ENCODE measurements at regions of chr5 and their contacts with region 1.

Region 1: DNA sequence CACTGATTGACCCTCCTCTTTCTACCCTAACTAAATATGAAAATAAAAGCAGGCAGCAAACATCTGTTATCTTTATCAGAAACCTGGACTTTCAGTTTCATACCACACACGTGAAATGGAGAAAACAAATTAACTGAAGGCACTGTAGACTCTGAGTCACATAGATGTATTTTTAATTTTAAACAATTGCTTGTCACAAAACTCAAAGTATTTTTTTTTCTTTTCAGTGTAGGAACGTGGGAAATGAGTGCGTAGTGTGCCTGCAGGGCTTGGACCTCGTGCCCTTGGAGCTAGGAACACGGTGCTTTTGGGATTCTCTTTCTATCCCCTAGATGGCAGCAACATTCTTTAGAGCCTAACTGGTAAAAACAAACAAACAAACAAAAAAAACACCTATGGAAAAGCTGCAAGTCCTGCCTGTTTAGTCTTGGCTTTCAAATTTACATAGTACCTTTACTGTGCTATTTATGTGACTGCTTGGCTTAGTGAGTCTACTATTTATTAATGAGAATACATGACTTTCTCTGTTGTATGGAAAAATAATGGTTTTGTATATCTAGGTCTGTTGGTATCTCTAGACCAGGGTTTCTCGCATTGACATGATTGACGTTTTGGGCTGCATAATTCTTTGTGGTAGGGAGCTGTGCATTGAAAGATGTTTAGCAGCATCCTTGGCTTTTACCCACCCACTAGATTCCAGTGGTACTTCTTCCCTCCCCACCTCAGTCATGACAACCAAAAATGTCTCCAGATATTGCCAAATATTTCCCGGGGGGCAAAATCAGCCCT is 16.8 kb upstream of the ACTBL2 start:
- DNase-seq: peak in 1 of 2 donors; percentile 7
- ATAC-seq: peak; percentile 50

Region 2: DNA sequence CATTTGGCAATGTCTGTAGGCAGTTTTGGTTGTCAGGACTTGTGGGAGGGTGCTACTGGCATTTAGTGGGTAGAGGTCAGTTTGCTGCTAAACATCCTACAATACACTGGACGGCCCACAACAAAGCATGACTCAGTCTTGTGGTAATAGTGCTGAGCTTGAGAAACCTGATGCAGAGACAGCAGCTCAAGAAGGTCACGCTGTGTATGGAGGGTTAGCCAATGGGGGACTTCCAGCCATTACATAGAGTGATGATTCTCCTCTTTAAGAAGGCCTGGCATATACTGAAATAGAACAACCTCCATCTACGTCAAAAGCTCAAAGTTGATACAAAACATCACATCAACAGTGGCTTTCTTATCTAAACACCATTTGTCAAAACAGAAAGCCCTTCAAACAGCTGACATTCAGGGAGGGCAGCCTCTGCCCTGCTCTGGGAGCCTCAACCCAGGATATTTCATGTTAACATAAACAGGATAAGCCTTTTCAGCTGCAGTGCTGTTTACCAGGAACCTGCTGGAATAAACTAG is 182.6 kb before region 1 on chr5:
- intact Hi-C with region 1: no loop called
- DNase-seq: peak in 1 of 2 donors; percentile 30
- ATAC-seq: peak; percentile 29

Region 3: DNA sequence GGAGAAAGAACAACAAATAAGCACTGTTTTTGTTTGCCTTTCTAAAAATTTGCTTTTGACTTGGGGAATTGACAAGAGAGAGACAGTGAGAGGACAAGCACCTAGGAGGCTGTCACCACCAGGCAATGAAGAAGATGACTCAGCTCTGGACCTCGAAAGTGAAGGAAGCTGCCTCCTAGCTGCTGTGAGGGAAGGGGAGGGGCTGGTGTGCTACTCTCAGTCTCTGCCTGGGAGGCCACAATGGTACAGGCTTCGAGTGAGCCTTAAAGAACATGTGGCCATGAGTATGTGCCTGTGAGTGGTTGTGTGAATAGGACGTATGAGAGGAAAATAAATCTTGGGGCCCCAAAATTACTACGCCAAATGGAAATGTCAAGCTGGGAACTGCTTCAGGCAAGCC is 967.5 kb after region 1 on chr5:
- intact Hi-C with region 1: loop called in 1 of 2 experiments (anchors 5 kb)
- DNase-seq: no peak
- ATAC-seq: no peak